MCF 10A (cell line): ENCODE measurements at regions of chr3 and their contacts with region 1.

Region 1: GRCh38 chr3:170414202-170414663 is 4.4 kb upstream of the CLDN11 start:
- DNase-seq: peak; percentile 78
- H3K4me3 Mint-ChIP-seq: no peak overlapping the region
- H3K27ac Mint-ChIP-seq: peak overlapping the region; percentile 39
- H3K4me1 Mint-ChIP-seq: peaks cover 9% of the 10 kb centered on the region
- H3K27me3 Mint-ChIP-seq: no peaks in the 10 kb centered on the region
- CTCF ChIP-seq: peak; percentile 95

Region 2: DNA sequence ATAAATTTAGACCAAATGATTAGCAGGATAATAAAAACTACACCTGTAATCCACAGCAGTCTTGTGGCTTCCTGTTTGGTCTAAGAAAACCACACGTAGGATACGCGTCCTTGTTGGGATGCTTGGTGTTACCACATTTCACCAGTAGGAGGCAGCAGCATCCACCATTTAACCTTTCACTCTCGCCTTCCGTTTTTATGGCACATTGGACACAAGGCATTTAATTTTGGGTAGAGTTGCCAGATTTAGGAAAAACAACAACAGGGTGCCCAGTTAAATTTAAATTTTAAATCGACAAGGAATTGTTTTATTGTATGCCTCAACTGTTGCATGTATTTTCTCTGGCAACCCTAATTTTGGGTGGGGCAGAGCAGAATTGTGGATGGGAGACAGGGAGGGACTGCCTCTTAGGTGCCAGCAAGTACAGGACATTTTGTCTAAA is 550.8 kb before region 1 on chr3:
- CTCF ChIA-PET with region 1: interaction called, 7 read pairs
- POLR2A ChIA-PET with region 1: no interaction called
- intact Hi-C with region 1: loop called (anchors 5 kb)
- DNase-seq: peak; percentile 85
- H3K4me3 Mint-ChIP-seq: no peak overlapping the region
- H3K27ac Mint-ChIP-seq: no peak overlapping the region
- H3K4me1 Mint-ChIP-seq: no peaks in the 10 kb centered on the region
- H3K27me3 Mint-ChIP-seq: no peaks in the 10 kb centered on the region
- CTCF ChIP-seq: peak; percentile 93

Region 3: GRCh38 chr3:170307671-170308403 is 106.4 kb before region 1 on chr3:
- CTCF ChIA-PET with region 1: interaction called, 25 read pairs
- POLR2A ChIA-PET with region 1: no interaction called
- intact Hi-C with region 1: loop called (anchors 1 kb)
- DNase-seq: peak; percentile 32
- H3K4me3 Mint-ChIP-seq: no peak overlapping the region
- H3K27ac Mint-ChIP-seq: no peak overlapping the region
- H3K4me1 Mint-ChIP-seq: no peaks in the 10 kb centered on the region
- H3K27me3 Mint-ChIP-seq: no peaks in the 10 kb centered on the region
- CTCF ChIP-seq: no peak

Region 4: GRCh38 chr3:170387950-170388349 is 26.3 kb before region 1 on chr3:
- CTCF ChIA-PET with region 1: interaction called, 11 read pairs
- POLR2A ChIA-PET with region 1: no interaction called
- intact Hi-C with region 1: no loop called
- DNase-seq: peak; percentile 13
- H3K4me3 Mint-ChIP-seq: no peak overlapping the region
- H3K27ac Mint-ChIP-seq: no peak overlapping the region
- H3K4me1 Mint-ChIP-seq: peaks cover 10% of the 10 kb centered on the region
- H3K27me3 Mint-ChIP-seq: no peaks in the 10 kb centered on the region
- CTCF ChIP-seq: no peak

Region 5: DNA sequence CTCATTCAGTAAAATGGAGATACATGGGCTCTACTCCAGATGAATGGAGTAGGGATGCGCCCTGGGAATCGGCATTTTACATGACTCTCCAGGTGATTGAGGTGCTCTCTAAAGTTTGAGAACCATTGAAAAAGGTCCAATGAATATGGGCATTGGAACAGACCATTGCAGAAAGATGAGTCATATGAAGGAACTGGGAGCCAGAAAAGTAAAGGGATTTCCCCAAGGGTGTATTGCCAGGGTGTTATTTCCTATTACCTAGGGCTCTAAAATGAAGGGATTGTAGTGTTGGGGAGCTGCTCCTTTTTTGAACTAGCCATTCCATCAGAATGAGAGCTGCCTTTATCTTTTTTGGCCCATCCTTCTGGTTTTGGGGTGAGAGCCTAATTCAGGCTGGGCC is 26.1 kb after region 1 on chr3:
- CTCF ChIA-PET with region 1: interaction called, 11 read pairs
- POLR2A ChIA-PET with region 1: interaction called, 3 read pairs
- intact Hi-C with region 1: no loop called
- DNase-seq: peak; percentile 76
- H3K4me3 Mint-ChIP-seq: no peak overlapping the region
- H3K27ac Mint-ChIP-seq: no peak overlapping the region
- H3K4me1 Mint-ChIP-seq: peaks cover 11% of the 10 kb centered on the region
- H3K27me3 Mint-ChIP-seq: no peaks in the 10 kb centered on the region
- CTCF ChIP-seq: no peak

Region 6: GRCh38 chr3:170614214-170614966 is 200.2 kb after region 1 on chr3:
- CTCF ChIA-PET with region 1: no interaction called
- POLR2A ChIA-PET with region 1: no interaction called
- intact Hi-C with region 1: loop called (anchors 5 kb)
- DNase-seq: peak; percentile 92
- H3K4me3 Mint-ChIP-seq: no peak overlapping the region
- H3K27ac Mint-ChIP-seq: no peak overlapping the region
- H3K4me1 Mint-ChIP-seq: peaks cover 15% of the 10 kb centered on the region
- H3K27me3 Mint-ChIP-seq: no peaks in the 10 kb centered on the region
- CTCF ChIP-seq: no peak

Region 7: DNA sequence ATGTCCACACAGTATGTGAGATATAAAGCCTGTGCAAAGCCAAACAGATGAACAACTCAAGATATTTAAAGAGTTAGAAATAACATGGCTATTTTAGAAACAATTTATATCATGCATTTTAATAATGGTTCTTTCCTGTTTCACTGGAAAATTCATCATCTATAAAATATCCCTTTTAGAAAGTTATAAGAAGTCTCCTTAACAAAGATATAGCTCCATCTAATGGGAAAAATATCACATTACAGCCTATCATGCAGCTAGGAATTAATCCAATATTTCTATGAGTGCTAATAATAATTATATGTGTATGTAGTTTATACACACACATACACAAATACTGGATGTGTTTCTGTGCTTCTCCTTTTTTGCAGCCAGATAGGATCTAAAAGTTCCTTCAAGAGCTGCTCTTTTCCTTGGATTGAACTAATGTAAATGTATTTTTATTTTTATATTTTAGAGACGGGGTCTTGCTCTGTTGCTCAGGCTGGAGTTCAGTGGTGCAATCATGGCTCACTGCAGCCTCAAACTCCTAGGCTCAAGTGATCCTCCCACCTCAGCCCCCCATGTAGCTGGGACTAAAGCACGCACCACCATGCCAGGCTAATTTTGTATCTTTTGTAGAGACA is 434.2 kb after region 1 on chr3:
- CTCF ChIA-PET with region 1: interaction called, 73 read pairs
- POLR2A ChIA-PET with region 1: interaction called, 5 read pairs
- intact Hi-C with region 1: loop called (anchors 1 kb)
- DNase-seq: peak; percentile 20
- H3K4me3 Mint-ChIP-seq: no peak overlapping the region
- H3K27ac Mint-ChIP-seq: no peak overlapping the region
- H3K4me1 Mint-ChIP-seq: no peaks in the 10 kb centered on the region
- H3K27me3 Mint-ChIP-seq: peaks cover 16% of the 10 kb centered on the region
- CTCF ChIP-seq: peak; percentile 56